GM13977 (cell line): ENCODE measurements at regions of chr7 and their contacts with region 1.

Region 1: DNA sequence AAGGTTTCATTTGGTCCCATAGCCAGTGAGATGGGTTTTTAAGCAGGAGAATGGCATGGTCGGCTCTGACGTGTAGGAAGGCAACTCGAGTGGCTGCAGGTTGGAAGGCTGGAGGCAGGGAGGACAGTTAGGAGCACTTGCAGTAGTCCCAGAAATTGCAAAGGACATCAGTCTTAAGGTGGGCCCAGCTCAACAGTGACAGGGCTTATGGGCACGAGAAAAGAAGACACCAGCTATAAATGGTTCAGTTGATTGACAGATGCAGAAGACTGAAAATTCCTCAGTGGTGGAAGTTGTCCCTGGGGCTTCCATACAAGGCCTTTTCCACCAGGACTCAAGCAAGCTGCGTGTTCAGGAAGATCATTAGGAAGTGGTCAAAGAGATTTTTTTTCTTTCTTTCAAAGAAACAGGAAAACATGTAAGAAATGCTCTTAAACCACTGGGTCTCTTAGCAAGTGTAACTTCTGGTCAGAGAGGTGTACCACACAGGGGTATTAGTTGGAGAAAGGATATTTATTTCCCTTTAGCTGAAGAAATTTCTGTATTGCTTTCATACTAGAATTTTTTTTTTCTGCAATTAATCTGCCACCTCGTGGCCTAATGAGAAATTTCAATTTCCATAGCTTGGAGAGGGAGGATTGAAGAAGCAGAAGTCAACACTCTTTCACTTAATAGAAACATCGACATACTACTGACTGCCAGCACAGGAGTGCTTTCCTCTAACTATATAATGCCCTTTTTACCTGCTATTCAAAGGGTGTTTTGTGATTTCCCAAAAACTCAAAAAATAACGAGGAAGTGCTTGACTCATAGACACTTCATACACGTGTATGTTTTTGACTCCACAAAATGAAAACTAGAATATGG is 177.4 kb upstream of the NAMPT start:
- DNase-seq: peak; percentile 9
- CTCF ChIP-seq: peak; percentile 57

Region 2: GRCh38 chr7:105046414-105046813 is 1415.8 kb before region 1 on chr7:
- in situ Hi-C with region 1: no loop called
- DNase-seq: no peak
- CTCF ChIP-seq: no peak

Region 3: GRCh38 chr7:105691733-105692564 is 770.3 kb before region 1 on chr7:
- in situ Hi-C with region 1: no loop called
- DNase-seq: peak; percentile 35
- CTCF ChIP-seq: no peak

Region 4: GRCh38 chr7:105795390-105795729 is 666.9 kb before region 1 on chr7:
- in situ Hi-C with region 1: no loop called
- DNase-seq: no peak
- CTCF ChIP-seq: no peak

Region 5: DNA sequence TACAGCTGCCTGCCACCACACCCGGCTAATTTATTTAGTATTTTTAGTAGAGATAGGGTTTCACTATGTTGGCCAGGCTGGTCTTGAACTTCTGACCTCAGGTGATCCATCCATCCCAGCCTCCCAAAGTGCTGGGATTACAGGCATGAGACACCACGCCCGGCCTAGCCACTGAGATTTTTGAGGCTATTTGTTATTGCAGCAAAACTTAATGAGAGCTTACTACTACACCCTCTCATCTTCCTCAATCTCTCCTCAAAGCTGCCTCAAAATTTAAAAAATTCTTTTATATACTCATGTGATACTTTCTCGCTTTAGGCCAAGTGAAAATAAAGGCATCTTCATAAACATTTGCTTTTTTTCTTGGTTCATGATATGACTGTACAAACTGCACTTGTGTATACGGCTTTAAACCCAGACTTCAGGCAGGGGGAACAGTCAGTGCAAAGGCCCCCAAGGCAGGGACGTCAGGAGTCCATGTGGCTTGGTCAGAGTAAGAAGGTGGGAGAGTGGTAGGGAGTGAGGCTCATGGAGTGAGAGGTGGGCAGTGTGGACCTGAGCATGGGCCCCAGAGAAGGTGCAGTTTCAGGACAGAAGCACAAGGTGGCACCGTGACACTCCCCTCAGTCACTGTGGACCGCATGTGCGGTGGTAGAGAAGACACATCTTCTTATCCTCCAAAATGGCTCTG is 405.6 kb before region 1 on chr7:
- in situ Hi-C with region 1: loop called (anchors 25 kb)
- DNase-seq: peak; percentile 77
- CTCF ChIP-seq: peak; percentile 96

Region 6: GRCh38 chr7:106176414-106177299 is 285.6 kb before region 1 on chr7:
- in situ Hi-C with region 1: loop called (anchors 5 kb)
- DNase-seq: peak; percentile 69
- CTCF ChIP-seq: peak; percentile 97

Region 7: GRCh38 chr7:106294337-106294736 is 167.9 kb before region 1 on chr7:
- in situ Hi-C with region 1: no loop called
- DNase-seq: no peak
- CTCF ChIP-seq: no peak